Right ventricle myocardium inferior (tissue), 1 donor: ENCODE measurements at regions of chr4 and their contacts with region 1.

Region 1: DNA sequence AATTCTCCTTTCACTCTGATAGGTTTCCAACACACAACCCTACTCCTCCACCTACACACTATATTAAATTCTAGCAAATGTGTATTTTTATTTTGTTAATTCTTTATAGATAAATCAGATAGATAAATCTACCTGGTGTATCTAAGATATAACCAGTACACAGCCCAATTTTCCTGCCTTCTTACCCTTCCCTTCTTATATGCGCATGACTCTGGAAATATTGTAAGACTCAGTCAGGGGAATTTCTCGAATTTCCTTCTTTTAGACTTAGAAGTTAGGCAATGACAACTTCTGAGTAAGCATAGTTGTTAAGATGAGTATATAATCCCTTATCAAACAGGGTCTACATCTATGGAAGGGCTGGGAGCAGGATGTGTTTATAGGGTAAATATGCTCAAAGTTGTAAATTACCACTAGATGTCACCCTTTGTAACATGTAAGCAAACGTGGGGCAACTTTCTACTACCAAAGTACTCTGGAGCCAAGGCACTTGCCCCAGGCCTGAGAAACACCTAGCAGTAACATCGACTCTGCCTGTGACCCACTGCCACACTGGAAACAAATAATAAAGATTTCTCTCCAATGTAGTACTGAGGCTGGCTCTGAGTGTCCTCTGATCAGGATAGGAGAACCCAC is 444.7 kb downstream of the IQCM start:
- DNase-seq: no peak
- ATAC-seq: peak; percentile 63

Region 2: DNA sequence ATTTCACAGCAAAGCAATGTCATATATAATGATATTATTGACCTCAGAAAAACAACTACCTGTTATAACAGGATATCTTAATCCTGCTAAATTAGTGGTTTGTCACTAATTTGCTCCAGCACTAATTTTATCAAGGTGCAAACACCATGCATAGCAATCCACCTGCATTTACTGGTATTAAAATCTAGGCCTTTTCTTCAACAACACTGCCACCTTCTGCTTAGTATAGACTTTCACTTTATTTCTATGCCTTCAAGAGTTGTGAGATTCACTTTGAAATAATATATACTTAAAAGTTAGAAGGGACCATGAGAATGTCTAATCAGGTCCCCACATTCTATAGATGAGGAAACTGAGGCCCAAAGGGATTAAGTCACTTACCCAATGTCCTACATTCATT is 526.9 kb after region 1 on chr4:
- intact Hi-C with region 1: loop called (anchors 2 kb)
- DNase-seq: no peak
- ATAC-seq: no peak